Panc1 (cell line): ENCODE measurements at regions of chr1 and their contacts with region 1.

Region 1: GRCh38 chr1:154398141-154398540 is 7.0 kb upstream of the IL6R start:
- DNase-seq: no peak
- ATAC-seq: no peak
- H3K4me3 ChIP-seq: no peak overlapping the region
- H3K27ac ChIP-seq: no peak overlapping the region
- H3K4me1 ChIP-seq: no peaks in the 10 kb centered on the region; the same call in 1 of the 2 replicates
- H3K27me3 ChIP-seq: no peaks in the 10 kb centered on the region
- CTCF ChIP-seq: no peak

Region 2: DNA sequence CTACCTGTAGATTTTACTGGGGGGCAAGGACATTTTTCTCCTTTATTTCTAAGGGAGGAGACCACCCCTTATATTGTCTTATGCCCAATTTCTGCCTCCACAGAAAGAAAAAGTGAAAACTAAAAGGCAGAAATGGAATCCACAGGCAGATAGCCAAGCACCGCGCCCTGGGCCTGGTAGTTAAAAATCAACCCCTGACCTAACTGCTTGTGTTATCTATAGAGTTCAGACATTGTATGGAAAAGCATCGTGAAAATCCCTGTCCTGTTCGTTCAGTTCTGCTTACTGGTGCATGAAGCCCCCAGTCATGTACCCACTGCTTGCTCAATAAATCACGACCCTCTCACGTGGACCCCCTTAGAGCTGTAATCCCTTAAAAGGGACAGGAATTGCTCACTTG is 26.7 kb before region 1 on chr1:
- CTCF ChIA-PET with region 1: interaction called, 12 read pairs
- POLR2A ChIA-PET with region 1: interaction called, 3 read pairs
- in situ Hi-C with region 1: no loop called
- intact Hi-C with region 1: no loop called
- DNase-seq: no peak
- ATAC-seq: no peak
- H3K4me3 ChIP-seq: no peak overlapping the region
- H3K27ac ChIP-seq: no peak overlapping the region
- H3K4me1 ChIP-seq: no peaks in the 10 kb centered on the region
- H3K27me3 ChIP-seq: no peaks in the 10 kb centered on the region
- CTCF ChIP-seq: no peak